ENCODE measurements at regions of chr7 and their contacts with region 1.

Region 1: GRCh38 chr7:74206589-74207120 is 3.2 kb upstream of the LAT2 start:
- DNase-seq: no peak
- H3K4me3 ChIP-seq: peak overlapping the region; percentile 38
- CTCF ChIP-seq: peak; percentile 86

Region 2: DNA sequence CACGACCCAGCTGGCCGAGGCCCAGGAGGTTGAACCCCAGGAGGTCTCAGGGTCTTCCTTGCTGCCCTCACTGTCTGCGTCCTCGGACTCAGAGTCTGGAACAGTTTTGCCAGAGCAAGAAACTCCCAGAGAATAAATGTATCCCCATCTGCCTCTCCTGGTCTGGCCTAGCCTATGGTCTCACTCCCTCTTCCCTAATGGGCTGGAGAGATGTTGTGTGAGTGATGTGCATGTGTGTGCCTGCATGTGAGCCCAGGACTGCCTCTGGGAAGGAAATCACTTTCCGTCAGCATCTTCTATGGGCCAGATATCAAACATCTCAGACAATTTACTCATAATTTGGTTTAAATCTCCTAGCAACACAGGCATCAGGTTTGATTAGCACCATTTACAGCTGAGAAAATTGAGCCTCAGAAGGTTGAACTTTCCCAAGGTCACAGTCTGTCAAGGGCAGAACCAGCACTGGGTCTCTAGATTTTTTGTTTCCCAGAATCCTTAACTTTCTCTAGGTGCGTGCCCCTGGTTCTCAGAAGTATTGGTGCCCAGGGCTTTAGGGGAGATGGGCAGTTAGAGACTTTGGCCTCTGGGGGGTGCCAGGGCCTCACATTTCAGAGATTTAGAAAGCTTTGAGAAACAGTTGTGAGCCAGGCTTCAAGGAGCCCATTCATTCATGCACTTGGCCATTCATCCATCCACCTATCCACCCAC is 340.8 kb before region 1 on chr7:
- CTCF ChIA-PET with region 1: interaction called, 15 read pairs
- POLR2A ChIA-PET with region 1: no interaction called
- DNase-seq: no peak
- H3K4me3 ChIP-seq: no peak overlapping the region
- CTCF ChIP-seq: peak; percentile 74

Region 3: DNA sequence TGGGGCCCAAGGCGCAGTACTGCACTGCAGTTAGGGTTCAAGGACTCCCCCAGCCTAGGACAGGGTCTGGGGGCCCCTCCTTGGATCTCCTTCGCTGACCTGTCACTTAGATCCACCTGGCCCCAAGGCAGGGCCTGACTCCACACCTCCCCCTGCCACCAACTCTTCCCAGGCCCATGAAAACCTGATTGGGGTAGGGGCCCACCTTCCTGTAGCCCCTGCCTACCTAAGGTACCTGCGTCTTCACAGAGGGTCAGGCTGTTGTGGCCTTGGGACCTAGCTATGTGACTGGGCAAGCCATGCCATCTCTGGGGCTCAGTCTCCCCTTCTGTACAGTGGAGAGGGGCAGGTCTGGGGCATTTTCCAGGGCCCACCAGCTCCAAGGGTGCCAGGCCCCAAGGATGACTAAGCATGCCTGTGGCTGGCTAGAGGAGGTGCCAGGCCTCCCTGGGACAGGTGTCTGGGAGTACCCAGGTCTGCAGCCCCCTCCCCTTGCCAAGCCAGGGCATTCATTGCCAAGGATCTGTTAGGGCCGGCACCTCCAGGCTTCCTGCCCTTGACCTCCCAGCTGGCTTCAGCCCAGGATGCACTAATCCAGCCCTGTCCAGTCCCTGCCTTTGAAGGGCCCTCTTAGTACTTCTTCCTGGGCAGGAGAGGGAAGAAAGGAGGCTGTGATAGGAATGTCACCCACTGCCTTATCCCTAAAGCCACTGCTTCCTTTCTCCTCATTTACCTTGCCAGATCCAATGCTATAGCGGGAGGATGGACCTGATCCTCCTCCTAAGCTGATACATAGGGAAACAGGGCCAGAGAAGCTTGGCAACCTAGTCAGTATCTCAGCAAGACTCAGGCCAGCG is 121.7 kb before region 1 on chr7:
- CTCF ChIA-PET with region 1: no interaction called
- POLR2A ChIA-PET with region 1: no interaction called
- DNase-seq: no peak
- H3K4me3 ChIP-seq: peak overlapping the region; percentile 64
- CTCF ChIP-seq: no peak

Region 4: DNA sequence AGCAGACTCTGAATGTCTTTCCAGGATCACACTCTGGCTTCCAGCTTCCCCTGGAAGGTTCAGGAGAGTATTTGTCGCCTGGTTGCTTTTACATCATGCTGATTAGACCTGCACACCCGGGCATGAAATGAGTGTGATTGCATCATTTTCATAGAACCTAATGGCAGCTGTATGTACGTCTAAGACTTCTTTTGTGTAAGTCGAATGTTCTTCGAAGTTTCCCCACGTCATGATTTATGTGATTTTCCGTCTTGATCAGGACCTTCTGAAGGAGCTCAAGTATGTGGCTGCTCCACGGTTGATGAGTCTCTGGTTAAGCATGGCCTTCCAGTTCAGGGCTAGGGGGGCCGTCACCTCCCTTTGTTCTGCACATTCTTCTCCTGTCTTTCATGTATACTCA is 28.0 kb before region 1 on chr7:
- CTCF ChIA-PET with region 1: interaction called, 21 read pairs
- POLR2A ChIA-PET with region 1: interaction called, 3 read pairs
- DNase-seq: no peak
- H3K4me3 ChIP-seq: no peak overlapping the region
- CTCF ChIP-seq: no peak

Region 5: DNA sequence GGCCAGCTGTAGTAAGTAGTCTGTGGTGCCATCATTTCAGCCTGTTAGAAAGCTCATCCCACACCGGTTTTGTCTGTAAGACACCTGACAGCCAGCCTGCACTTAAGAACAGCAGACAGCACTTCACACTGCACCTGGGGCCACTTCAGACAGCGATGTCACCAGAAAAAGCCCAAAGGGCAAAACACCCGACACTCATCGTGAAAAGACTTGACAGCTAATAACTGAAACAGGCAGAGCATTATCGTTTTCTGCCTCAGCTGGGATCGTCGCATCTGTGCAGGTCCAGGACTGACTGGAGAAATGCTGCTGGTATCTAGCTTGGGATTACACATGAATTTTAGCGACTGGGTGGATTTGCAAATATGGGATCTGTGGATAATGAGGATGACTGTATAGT is 13.6 kb before region 1 on chr7:
- CTCF ChIA-PET with region 1: interaction called, 81 read pairs
- POLR2A ChIA-PET with region 1: no interaction called
- DNase-seq: no peak
- H3K4me3 ChIP-seq: no peak overlapping the region
- CTCF ChIP-seq: no peak

Region 6: GRCh38 chr7:74230446-74231231 is 24.0 kb after region 1 on chr7:
- CTCF ChIA-PET with region 1: interaction called, 10 read pairs
- POLR2A ChIA-PET with region 1: no interaction called
- DNase-seq: no peak
- H3K4me3 ChIP-seq: no peak overlapping the region
- CTCF ChIP-seq: no peak

Region 7: GRCh38 chr7:74443543-74444247 is 237.0 kb after region 1 on chr7:
- CTCF ChIA-PET with region 1: no interaction called
- POLR2A ChIA-PET with region 1: no interaction called
- DNase-seq: no peak
- H3K4me3 ChIP-seq: no peak overlapping the region
- CTCF ChIP-seq: no peak